Endothelial cell of umbilical vein (primary cell): ENCODE measurements at regions of chr7 and their contacts with region 1.

Region 1: DNA sequence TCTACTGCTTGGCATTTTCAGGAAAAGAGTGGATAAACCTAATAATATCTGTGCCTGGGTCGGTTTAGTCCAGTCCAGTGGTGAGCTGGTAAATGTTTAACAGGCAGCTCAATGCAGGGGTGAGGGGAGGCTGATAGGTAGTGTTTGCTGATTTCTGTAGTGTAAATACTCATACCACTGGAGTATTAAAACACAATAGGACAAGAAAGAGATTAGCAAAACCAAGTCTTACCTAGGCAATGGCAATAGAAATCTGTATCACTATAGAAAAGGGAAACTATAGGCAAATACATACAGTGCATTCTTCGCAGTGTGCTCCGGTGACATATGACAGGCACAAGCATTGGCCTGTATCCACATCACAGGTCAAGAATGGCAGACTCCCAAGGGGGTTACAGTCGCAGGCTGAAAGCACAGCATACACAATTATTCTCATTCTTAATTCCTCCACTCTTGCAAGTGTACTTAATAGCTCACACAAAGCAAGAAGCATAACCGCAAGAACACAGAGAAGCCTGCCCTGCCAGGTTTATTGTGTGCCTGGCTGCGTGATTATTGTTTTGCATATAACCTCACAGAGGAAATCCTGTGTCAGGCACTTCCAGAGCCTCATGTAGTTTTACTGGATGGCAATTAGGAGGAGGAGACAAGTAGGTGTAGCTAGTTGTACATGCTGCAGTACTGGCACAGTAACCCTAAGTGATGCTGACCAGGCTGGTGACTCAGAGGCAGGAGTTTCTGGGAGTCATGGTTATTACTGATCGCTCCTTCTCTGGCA is 35.0 kb downstream of the LAMB4 start:
- DNase-seq: peak; percentile 86
- H3K4me3 ChIP-seq: no peak overlapping the region
- H3K27ac ChIP-seq: peak overlapping the region; percentile 58
- H3K4me1 ChIP-seq: peaks cover 29% of the 10 kb centered on the region
- H3K27me3 ChIP-seq: no peaks in the 10 kb centered on the region
- CTCF ChIP-seq: no peak
- POLR2A ChIP-seq: no peak

Region 2: GRCh38 chr7:107933386-107934013 is 161.6 kb before region 1 on chr7:
- CTCF ChIA-PET with region 1: no interaction called
- POLR2A ChIA-PET with region 1: interaction called, 12 read pairs
- dilution Hi-C with region 1: no loop called
- intact Hi-C with region 1: no loop called
- DNase-seq: no peak
- H3K4me3 ChIP-seq: no peak overlapping the region
- H3K27ac ChIP-seq: no peak overlapping the region
- H3K4me1 ChIP-seq: peaks cover 7% of the 10 kb centered on the region
- H3K27me3 ChIP-seq: no peaks in the 10 kb centered on the region
- CTCF ChIP-seq: no peak
- POLR2A ChIP-seq: no peak

Region 3: GRCh38 chr7:108002726-108003598 is 92.2 kb before region 1 on chr7 and contains the start of gene LAMB1:
- CTCF ChIA-PET with region 1: interaction called, 40 read pairs
- POLR2A ChIA-PET with region 1: interaction called, 4 read pairs
- dilution Hi-C with region 1: no loop called
- intact Hi-C with region 1: loop called (anchors 1 kb)
- DNase-seq: peak; percentile 83
- H3K4me3 ChIP-seq: peak within 1 kb of the TSS; percentile 84 to 95 (median 90)
- H3K27ac ChIP-seq: peak within 1 kb of the TSS; percentile 99
- H3K4me1 ChIP-seq: peaks cover 45% of the 10 kb centered on the region
- H3K27me3 ChIP-seq: no peaks in the 10 kb centered on the region
- CTCF ChIP-seq: no peak
- POLR2A ChIP-seq: peak; percentile 97
- total RNA-seq, gene LAMB1: 703 and 734 TPM in 2 replicates

Region 4: DNA sequence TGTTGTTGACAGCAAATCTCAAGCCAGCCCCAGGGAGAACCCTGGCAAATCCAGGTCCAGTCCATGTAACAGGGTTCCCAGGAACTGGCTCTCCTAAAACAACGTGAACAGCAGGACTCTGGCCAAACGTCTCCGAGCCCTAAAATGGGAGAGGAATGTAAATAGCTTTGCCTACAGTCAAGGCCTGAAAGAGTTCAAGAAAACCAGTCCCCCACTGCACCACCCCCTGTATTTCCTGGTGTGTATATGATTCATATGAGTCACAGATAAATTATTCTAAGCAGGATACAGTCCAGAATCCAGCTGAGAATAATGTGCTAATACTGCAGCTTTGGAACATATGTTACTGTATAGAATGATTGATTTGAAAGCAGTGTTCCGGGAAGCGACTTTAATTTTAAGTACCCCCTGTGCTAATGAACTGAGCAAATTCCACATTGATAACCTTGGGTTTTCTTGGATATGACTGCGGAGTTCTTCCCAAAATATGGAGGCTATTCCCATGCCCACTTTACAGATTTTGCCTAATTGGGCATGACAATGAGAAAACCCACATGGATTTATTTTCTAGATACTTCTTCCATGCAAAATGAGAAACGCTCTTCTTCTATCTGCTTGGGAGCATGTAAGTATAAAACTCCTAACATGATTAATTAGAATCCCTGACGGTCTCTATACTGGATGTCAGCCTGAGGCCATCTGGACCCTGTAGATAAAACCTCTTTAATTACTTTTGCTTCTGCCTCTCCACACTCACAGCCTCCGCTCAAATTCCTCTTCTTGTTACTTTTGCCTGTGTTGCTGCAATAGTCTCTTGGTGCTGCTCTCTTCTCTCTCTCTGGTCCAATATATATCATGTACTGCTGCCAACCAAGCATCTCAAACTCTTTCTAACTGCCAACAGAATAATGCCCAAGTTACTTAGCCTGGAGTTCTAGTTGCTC is 15.2 kb before region 1 on chr7:
- CTCF ChIA-PET with region 1: interaction called, 12 read pairs
- POLR2A ChIA-PET with region 1: interaction called, 4 read pairs
- dilution Hi-C with region 1: no loop called
- intact Hi-C with region 1: loop called (anchors 1 kb)
- DNase-seq: peak; percentile 87
- H3K4me3 ChIP-seq: peak overlapping the region in 1 of 3 experiments; percentile 13
- H3K27ac ChIP-seq: peak overlapping the region; percentile 92
- H3K4me1 ChIP-seq: peaks cover 40% of the 10 kb centered on the region
- H3K27me3 ChIP-seq: no peaks in the 10 kb centered on the region
- CTCF ChIP-seq: no peak
- POLR2A ChIP-seq: peak; percentile 54

Region 5: GRCh38 chr7:108348904-108349303 is 253.8 kb after region 1 on chr7:
- CTCF ChIA-PET with region 1: no interaction called
- POLR2A ChIA-PET with region 1: no interaction called
- dilution Hi-C with region 1: no loop called
- intact Hi-C with region 1: no loop called
- DNase-seq: no peak
- H3K4me3 ChIP-seq: no peak overlapping the region
- H3K27ac ChIP-seq: no peak overlapping the region
- H3K4me1 ChIP-seq: peaks cover 7% of the 10 kb centered on the region
- H3K27me3 ChIP-seq: no peaks in the 10 kb centered on the region
- CTCF ChIP-seq: no peak
- POLR2A ChIP-seq: no peak